AG04450 (cell line): ENCODE measurements at regions of chr10 and their contacts with region 1.

Region 1: GRCh38 chr10:47024399-47025252 is 113.4 kb downstream of the PTPN20 start:
- DNase-seq: peak; percentile 6
- H3K4me3 ChIP-seq: no peak overlapping the region
- H3K27ac ChIP-seq: no peak overlapping the region
- H3K27me3 ChIP-seq: no peaks in the 10 kb centered on the region
- CTCF ChIP-seq: peak; percentile 90

Region 2: DNA sequence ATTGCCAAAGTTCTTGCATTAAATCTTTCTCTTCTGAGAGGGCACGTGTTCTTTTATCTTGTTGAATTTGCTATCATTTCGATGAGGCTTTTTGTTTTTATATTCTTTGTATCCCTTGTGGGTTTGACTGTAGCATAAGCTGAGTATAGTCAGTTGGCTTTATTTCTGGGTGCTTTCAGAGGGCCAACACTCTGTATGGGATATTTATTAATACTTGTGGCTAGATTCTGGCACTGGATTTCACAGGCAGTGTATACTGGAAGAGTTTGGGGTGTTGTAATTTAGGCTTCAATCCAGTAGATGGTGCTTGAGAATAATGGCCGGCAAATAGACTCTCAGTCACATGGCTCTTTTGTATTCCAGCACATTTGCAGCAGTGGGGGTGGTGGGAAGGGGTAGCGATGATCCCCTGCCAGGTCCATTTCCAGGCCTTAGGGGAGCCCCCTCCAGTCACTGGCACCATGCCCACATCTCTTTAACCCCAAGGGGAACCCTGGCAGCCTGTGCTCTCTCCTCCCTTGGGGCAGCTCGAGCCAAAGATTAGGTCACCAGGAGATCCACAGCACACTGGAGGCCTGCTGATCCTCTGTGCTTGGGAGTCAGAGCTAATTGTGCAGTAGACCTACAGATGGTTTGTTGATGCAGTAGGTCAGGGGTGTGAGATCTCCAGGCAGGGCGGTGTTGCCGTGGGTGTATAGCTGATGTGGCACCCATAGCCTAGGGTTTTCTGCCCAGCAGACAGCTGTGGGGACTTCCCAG is 31.6 kb before region 1 on chr10:
- CTCF ChIA-PET with region 1: interaction called, 22 read pairs
- POLR2A ChIA-PET with region 1: no interaction called
- DNase-seq: no peak
- H3K4me3 ChIP-seq: no peak overlapping the region
- H3K27ac ChIP-seq: no peak overlapping the region
- H3K27me3 ChIP-seq: no peaks in the 10 kb centered on the region
- CTCF ChIP-seq: peak; percentile 65

Region 3: GRCh38 chr10:46999217-46999616 is 25.4 kb before region 1 on chr10:
- CTCF ChIA-PET with region 1: interaction called, 22 read pairs
- POLR2A ChIA-PET with region 1: no interaction called
- DNase-seq: no peak
- H3K4me3 ChIP-seq: no peak overlapping the region
- H3K27ac ChIP-seq: no peak overlapping the region
- H3K27me3 ChIP-seq: peaks cover 2% of the 10 kb centered on the region
- CTCF ChIP-seq: no peak

Region 4: GRCh38 chr10:47013507-47014154 is 11.0 kb before region 1 on chr10:
- CTCF ChIA-PET with region 1: interaction called, 19 read pairs
- POLR2A ChIA-PET with region 1: no interaction called
- DNase-seq: no peak
- H3K4me3 ChIP-seq: no peak overlapping the region
- H3K27ac ChIP-seq: no peak overlapping the region
- H3K27me3 ChIP-seq: peaks cover 5% of the 10 kb centered on the region
- CTCF ChIP-seq: no peak

Region 5: GRCh38 chr10:47133871-47134570 is 109.4 kb after region 1 on chr10:
- CTCF ChIA-PET with region 1: no interaction called
- POLR2A ChIA-PET with region 1: no interaction called
- DNase-seq: no peak
- H3K4me3 ChIP-seq: no peak overlapping the region
- H3K27ac ChIP-seq: no peak overlapping the region
- H3K27me3 ChIP-seq: no peaks in the 10 kb centered on the region
- CTCF ChIP-seq: no peak

Region 6: GRCh38 chr10:47225219-47225927 is 200.7 kb after region 1 on chr10:
- CTCF ChIA-PET with region 1: no interaction called
- POLR2A ChIA-PET with region 1: no interaction called
- DNase-seq: no peak
- H3K4me3 ChIP-seq: no peak overlapping the region
- H3K27ac ChIP-seq: no peak overlapping the region
- H3K27me3 ChIP-seq: peaks cover 18% of the 10 kb centered on the region
- CTCF ChIP-seq: no peak

Region 7: DNA sequence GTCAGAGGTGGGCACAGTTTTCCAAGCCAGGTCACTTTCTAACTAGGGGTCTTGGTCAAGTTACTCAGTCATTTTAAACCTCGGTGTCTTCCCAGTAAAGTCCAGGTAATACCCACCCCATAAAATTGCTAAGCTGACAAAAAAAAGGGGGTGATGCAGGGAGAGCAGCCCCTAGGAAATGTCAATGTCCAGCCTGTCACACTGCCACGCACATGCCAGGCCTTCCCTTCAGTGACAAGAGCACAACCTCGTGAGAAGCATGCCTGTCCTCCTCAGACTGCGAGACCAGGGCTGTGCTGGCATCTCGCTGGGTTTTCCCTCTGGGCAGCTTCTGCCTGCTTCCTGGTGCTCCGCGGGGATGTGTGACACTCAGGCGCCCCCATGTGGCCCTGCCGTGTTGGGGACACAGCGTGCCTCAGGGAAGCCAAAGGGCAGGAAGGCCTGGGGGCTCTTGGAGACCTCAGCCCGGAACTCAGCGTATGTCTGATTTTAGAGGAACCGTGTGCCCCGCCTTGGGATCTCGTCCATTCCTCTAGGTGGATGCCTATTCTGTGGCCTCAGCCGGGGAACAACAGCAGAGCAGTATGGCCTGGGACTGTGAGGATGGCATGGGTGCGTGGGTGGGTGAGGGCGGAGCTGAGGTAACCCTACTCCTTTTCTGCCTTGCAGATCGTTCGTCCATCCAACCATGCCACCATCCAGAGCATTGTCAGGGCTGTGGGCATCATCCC is 287.5 kb after region 1 on chr10:
- CTCF ChIA-PET with region 1: interaction called, 82 read pairs
- POLR2A ChIA-PET with region 1: no interaction called
- DNase-seq: peak; percentile 43
- H3K4me3 ChIP-seq: no peak overlapping the region
- H3K27ac ChIP-seq: no peak overlapping the region
- H3K27me3 ChIP-seq: peaks cover 13% of the 10 kb centered on the region
- CTCF ChIP-seq: peak; percentile 96